PC-9 (cell line): ENCODE measurements at regions of chr2 and their contacts with region 1.

Region 1: DNA sequence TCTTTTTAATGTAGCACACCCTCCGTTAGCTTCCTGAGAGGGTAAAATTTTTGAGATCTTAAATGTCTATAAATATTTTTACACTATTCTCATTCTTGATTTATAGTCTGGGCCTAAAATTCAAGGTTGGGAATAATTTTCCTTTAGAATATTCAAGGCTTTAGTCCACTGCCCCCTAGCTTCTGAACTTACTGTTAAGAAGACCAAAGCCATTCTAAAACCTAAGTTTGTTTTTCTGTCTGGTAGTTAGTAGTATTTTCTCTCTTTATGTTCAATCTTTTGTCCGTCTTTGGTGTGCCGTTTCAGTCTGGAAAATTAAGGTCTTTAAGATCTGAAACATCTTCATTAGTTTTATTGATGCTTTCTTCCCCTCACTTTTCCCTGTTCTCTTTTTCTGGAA is 14.5 kb downstream of the OSBPL6 start:
- DNase-seq: no peak
- H3K4me3 ChIP-seq: no peak overlapping the region
- H3K27ac ChIP-seq: no peak overlapping the region
- H3K4me1 ChIP-seq: no peaks in the 10 kb centered on the region
- H3K27me3 ChIP-seq: no peaks in the 10 kb centered on the region
- CTCF ChIP-seq: peak; percentile 51

Region 2: GRCh38 chr2:177900082-177900481 is 308.7 kb before region 1 on chr2:
- CTCF ChIA-PET with region 1: no interaction called
- POLR2A ChIA-PET with region 1: no interaction called
- intact Hi-C with region 1: no loop called
- DNase-seq: peak in 1 of 2 experiments; percentile 56
- H3K4me3 ChIP-seq: no peak overlapping the region
- H3K27ac ChIP-seq: no peak overlapping the region
- H3K4me1 ChIP-seq: peaks cover 13% of the 10 kb centered on the region
- H3K27me3 ChIP-seq: no peaks in the 10 kb centered on the region
- CTCF ChIP-seq: no peak

Region 3: DNA sequence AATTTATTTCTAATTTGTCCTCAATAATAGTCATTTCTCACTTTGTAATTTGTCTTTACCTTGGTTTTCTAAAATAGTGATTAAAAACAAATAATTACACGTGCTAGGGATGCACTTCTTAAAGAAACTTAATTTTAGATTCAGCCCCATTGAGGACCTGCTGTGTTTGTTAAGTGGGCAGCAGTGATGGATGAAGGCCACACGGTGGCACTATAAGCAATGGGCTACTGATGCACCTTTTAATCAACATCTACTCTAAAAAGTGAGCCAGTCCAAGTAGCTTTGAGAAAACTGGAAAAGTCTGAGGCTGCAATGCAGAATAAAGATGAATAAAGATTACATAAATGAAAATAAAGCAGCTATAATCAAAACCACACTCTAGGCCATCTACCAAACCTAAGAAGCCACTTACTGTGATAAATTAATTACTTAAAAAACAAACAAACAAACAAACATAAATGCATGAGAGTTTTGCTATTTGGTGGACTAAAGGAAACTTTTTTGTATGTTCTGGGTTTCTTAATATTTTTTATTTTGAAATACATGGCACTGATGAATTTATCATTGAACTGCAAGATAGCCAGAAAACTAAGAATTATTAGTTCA is 225.5 kb before region 1 on chr2:
- CTCF ChIA-PET with region 1: no interaction called
- POLR2A ChIA-PET with region 1: no interaction called
- intact Hi-C with region 1: no loop called
- DNase-seq: peak; percentile 43 to 56
- H3K4me3 ChIP-seq: no peak overlapping the region
- H3K27ac ChIP-seq: no peak overlapping the region
- H3K4me1 ChIP-seq: no peaks in the 10 kb centered on the region
- H3K27me3 ChIP-seq: no peaks in the 10 kb centered on the region
- CTCF ChIP-seq: peak; percentile 96

Region 4: GRCh38 chr2:178114462-178114861 is 94.4 kb before region 1 on chr2:
- CTCF ChIA-PET with region 1: no interaction called
- POLR2A ChIA-PET with region 1: no interaction called
- intact Hi-C with region 1: no loop called
- DNase-seq: no peak
- H3K4me3 ChIP-seq: no peak overlapping the region
- H3K27ac ChIP-seq: no peak overlapping the region
- H3K4me1 ChIP-seq: peaks cover 15% of the 10 kb centered on the region
- H3K27me3 ChIP-seq: no peaks in the 10 kb centered on the region
- CTCF ChIP-seq: no peak

Region 5: GRCh38 chr2:178379162-178380004 is 170.6 kb after region 1 on chr2:
- CTCF ChIA-PET with region 1: interaction called, 15 read pairs
- POLR2A ChIA-PET with region 1: no interaction called
- intact Hi-C with region 1: no loop called
- DNase-seq: no peak
- H3K4me3 ChIP-seq: no peak overlapping the region
- H3K27ac ChIP-seq: no peak overlapping the region
- H3K4me1 ChIP-seq: no peaks in the 10 kb centered on the region
- H3K27me3 ChIP-seq: no peaks in the 10 kb centered on the region
- CTCF ChIP-seq: no peak